Endothelial cell of umbilical vein (primary cell): ENCODE measurements at regions of chr12 and their contacts with region 1.

Region 1: GRCh38 chr12:7844116-7844515 is 28.6 kb downstream of the SLC2A14 start:
- DNase-seq: peak; percentile 54
- H3K4me3 ChIP-seq: no peak overlapping the region
- H3K27ac ChIP-seq: no peak overlapping the region
- H3K4me1 ChIP-seq: peaks cover 21% of the 10 kb centered on the region
- H3K27me3 ChIP-seq: no peaks in the 10 kb centered on the region
- CTCF ChIP-seq: no peak
- POLR2A ChIP-seq: no peak

Region 2: GRCh38 chr12:7748852-7749251 is 95.3 kb before region 1 on chr12:
- CTCF ChIA-PET with region 1: no interaction called
- POLR2A ChIA-PET with region 1: no interaction called
- dilution Hi-C with region 1: no loop called
- intact Hi-C with region 1: no loop called
- DNase-seq: no peak
- H3K4me3 ChIP-seq: no peak overlapping the region
- H3K27ac ChIP-seq: no peak overlapping the region
- H3K4me1 ChIP-seq: no peaks in the 10 kb centered on the region
- H3K27me3 ChIP-seq: no peaks in the 10 kb centered on the region
- CTCF ChIP-seq: no peak
- POLR2A ChIP-seq: no peak

Region 3: DNA sequence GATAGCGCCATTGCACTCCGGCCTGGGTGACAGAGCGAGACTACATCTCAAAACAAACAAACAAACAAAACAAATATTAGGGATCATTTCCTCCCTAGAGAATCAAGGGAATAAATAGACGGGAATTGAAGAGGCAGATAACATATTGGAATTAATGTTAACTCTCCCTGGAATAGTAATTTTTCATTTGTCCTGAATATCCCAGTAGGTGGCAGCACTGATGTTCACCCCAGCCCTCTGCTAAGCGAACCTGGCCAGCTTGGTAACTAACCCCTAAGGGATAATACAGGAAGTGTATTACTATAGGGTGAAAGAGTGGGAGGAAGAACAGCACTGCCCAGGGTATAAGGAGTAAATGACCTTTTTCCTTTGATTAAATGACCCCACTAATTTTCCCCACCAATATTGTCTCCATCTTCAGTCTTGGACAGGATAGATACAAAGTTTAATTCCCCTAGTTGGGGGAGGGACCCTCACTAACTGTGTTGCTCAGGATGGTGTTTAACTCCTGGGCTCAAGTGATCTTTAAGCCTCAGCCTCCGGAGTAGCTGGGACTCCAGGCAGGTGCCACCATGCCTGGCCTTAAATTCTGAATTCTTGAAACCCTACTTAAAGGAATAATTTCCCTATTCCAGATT is 11.9 kb before region 1 on chr12:
- CTCF ChIA-PET with region 1: interaction called, 11 read pairs
- POLR2A ChIA-PET with region 1: interaction called, 4 read pairs
- dilution Hi-C with region 1: no loop called
- intact Hi-C with region 1: no loop called
- DNase-seq: peak; percentile 58
- H3K4me3 ChIP-seq: no peak overlapping the region
- H3K27ac ChIP-seq: no peak overlapping the region
- H3K4me1 ChIP-seq: no peaks in the 10 kb centered on the region
- H3K27me3 ChIP-seq: peaks cover 0 to 2% of the 10 kb centered on the region in 2 experiments
- CTCF ChIP-seq: peak; percentile 44 to 45
- POLR2A ChIP-seq: no peak